Activated naive CD4-positive, alpha-beta T cell treated with anti-CD3 and anti-CD28 coated beads for 36 hours (primary cell): ENCODE measurements at regions of chr9 and their contacts with region 1.

Region 1: DNA sequence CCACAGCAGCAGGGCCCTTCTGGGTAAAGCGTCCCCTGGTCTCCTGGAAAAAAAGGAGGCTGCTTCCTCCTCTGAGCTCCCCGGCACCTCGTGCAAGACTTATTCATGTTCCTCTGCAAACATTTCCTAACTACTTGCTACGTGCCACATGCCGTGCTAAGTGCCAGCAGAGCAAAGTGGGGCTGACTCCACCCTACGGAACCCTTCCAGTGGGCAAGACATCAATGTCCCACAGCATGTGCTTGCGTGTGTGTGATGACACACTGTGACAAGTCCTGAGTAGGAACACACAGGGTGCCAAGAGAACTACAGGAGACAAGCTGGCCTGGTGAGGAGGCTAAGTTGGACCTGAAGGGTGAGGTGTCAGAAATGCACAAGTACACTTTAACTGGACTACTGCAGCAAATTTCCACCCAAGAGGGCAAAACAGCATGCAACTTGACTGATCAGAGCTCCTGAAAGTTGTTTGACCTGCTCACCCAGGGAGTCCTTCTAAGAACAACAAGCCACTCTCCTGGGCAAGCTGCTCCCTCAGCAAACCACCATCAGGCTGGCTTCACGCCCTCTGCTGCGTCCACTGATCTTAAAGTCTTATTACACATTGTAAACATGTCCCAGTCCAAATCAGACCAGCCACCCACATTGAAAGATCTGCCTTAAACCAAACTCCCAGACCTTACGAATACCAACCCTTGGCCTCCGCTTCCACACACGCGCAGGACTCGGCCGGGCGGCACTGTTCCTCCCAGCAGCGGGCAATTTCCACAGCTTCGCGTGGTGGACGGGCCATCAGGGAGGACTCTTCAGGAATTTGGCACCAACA is 57.2 kb downstream of the SEMA4D start:
- DNase-seq: no peak
- H3K4me3 Mint-ChIP-seq: no peak overlapping the region
- H3K27ac Mint-ChIP-seq: peak overlapping the region; percentile 67
- H3K4me1 Mint-ChIP-seq: peaks cover 94% of the 10 kb centered on the region
- H3K27me3 Mint-ChIP-seq: no peaks in the 10 kb centered on the region

Region 2: DNA sequence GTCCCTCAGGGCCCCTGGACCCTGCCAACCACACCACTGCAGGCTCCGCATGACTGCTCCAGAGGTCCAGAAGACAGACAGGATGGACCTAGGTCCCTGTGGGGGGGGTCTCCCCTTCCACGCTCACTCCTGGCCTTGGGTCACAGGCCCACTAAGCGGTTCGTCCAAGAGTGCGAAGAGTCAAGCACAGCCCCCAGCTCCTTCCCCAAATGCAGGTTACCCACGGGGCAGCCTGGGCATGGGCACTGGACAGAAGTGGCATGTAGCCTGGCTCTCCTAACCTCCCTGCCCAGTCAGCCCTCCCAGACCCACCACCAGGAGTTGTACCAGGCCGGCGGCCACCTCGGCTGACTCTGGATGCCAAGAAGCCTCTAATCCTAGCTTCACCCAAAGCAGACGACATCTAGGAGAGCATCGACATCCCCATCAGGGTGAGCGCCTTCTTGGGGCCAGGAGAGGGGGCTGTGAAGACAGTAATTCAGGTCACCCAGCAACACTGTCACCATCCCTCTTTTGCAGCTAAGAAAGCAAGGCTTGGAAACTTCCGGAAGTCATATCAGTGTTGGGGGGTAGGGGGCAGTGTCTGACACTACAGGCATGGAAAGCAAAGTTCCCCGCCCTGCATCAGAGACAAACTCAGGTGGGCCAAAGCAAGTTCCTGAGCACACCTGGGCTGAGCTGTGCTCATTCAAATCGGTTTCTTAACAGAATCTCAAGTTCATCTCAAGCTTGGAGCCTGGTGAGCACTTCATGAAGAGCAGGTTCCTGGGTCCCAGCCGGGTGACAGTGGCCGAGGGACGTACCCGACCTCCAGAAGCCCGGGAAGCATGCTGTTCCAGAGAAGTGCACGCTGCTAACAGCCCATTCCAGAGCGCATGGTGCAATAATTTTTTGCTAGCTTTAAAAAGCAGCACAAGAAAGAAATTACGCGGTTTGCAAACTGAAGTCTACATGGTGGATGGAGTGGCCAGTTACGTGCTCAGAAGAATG is 11.6 kb before region 1 on chr9:
- CTCF ChIA-PET with region 1: interaction called, 11 read pairs
- intact Hi-C with region 1: no loop called
- DNase-seq: peak; percentile 79
- H3K4me3 Mint-ChIP-seq: no peak overlapping the region
- H3K27ac Mint-ChIP-seq: peak overlapping the region; percentile 98
- H3K4me1 Mint-ChIP-seq: peaks cover 90% of the 10 kb centered on the region
- H3K27me3 Mint-ChIP-seq: no peaks in the 10 kb centered on the region